ENCODE measurements at regions of chr4 and their contacts with region 1.

Region 1: GRCh38 chr4:110510955-110511544 is 35.1 kb downstream of the ENPEP start:
- DNase-seq: no peak
- ATAC-seq: no peak

Region 2: DNA sequence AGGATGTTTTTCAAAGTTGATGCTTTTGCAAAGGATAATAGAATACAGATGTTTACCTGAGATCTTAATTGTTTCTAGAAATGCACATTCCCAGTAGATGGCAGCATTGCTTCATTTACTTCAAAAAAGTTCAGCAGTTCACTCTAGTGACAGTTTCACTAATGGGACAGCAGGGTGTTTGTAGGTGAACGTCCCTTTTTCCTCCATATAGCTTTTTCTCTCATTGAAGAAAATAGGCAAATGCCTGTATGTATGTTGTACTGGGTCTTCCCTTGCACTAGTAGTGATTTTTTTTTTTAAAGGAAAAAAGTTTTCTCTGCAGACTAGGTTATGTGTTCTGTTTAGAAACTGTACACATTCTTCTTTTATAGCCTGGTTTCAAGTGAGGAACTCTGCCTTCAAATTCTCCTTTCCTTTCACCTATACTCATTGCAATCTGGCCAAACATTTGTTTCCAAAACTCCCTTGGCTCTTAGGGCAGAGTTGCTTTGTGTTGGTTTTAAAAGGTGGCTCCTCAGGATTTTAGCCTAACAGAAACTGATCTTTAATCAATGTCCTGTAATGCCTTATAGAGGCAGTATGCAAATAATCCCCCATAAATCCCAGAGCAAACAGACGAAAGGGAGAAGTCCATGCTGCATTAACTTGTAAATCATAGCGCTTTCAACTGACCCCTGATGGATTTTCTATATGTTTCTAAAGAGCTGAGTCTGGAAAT is 512.0 kb before region 1 on chr4:
- intact Hi-C with region 1: loop called (anchors 2 to 5 kb)
- DNase-seq: no peak
- ATAC-seq: peak in 1 of 2 donors; percentile 47

Region 3: DNA sequence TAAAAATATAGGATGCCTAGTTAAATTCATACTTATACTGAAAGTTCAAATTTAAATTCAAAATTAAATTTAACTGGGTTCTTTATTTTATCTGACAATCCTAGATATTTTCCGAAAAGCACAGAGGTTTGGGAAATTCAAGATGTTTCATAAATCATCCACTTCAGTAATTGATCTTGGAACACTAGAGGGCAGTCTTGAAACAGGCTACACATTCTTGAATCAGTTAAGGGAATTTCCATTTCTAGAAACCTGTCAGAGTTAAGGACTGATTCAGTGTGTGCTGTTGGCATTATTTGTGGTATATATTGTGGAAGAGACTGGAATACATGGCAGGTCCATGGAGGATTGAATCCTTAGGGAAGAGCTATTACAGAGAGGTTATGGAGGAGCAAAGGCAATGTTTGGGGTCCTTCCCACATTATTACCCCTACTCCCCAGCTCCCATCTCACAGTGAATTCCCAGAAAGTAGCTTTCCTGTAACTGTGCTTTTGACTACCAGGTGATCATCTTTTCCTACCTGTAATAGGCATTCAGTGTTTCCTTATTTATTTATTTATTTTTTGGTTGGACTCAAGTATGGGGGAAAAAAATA is 505.5 kb before region 1 on chr4:
- intact Hi-C with region 1: loop called (anchors 2 to 5 kb)
- DNase-seq: no peak
- ATAC-seq: peak; percentile 38 to 50

Region 4: DNA sequence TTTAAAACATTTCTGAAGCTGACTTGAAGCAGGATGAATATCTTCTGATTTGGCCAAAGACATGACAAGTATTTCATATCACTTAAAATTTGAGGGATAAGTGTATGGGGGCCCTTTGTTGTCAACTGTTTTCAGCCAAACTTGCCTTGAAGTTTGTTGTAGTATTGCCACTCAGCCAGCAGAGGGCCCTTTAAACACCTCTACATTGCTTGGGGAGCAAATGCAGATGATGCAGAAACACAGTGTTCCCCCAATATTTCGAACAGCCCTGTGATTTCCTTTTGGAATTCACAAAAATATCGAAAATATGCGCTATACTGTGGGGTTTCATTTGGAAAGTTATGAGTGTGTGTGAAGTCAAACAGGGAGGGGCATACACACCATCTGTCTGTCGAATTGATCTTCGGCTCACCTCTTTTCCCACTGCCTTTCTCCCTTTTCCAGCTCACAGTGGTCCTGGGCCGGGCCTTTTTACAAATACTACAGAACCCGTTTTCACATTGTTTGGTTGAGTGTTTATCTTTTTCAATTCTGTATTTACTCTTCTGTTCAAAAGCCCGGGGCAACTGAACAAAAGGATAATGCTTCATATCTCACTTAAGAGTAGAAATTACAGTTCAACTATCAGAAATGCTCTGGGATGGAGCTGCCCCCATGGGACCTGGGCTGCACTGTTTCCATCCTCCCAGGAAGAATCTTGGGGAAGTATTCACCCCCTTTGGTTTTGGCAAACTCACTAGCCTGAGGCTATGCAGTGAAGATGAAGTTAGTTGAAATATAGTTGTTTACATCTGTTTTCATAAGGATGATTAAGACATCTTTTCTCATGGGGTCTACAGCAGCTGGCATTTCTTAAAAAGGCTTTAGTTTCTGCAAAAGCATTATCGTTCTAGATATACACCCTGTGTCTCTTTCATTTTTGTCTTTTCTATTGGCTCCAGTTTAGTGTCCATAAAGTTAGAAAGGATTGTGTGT is 460.8 kb before region 1 on chr4:
- intact Hi-C with region 1: loop called in 1 of 2 experiments (anchors 5 kb)
- DNase-seq: no peak
- ATAC-seq: peak in 1 of 2 donors; percentile 34

Region 5: GRCh38 chr4:110310795-110311194 is 200.3 kb before region 1 on chr4:
- intact Hi-C with region 1: loop called (anchors 5 to 10 kb)
- DNase-seq: no peak
- ATAC-seq: no peak

Region 6: DNA sequence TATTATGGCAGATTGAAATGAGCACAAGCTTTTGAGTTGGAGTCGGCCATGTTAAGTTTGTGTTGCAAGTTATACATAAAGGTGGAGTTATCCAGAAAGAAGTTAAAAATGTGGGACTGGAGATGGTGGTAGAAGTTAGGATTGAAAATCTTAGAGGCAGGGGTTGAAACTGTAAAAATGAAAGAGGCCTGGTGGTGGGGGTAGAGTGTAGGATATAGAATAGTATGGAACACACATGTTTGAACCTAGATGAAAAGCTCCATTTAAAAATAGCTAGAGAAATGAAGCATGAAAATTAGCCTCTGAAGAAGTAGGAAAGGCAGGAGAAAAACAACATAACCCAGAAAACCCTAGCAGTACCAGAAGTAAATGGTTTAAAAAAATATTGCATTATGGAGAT is 166.9 kb before region 1 on chr4:
- intact Hi-C with region 1: loop called (anchors 10 kb)
- DNase-seq: no peak
- ATAC-seq: no peak